Posterior cingulate gyrus (tissue), 11 donors: ENCODE measurements at regions of chr2 and their contacts with region 1.

Region 1: GRCh38 chr2:208254871-208255556 is at the start of gene IDH1:
- DNase-seq: peak; percentile 93 to 100 (median 97)

Region 2: DNA sequence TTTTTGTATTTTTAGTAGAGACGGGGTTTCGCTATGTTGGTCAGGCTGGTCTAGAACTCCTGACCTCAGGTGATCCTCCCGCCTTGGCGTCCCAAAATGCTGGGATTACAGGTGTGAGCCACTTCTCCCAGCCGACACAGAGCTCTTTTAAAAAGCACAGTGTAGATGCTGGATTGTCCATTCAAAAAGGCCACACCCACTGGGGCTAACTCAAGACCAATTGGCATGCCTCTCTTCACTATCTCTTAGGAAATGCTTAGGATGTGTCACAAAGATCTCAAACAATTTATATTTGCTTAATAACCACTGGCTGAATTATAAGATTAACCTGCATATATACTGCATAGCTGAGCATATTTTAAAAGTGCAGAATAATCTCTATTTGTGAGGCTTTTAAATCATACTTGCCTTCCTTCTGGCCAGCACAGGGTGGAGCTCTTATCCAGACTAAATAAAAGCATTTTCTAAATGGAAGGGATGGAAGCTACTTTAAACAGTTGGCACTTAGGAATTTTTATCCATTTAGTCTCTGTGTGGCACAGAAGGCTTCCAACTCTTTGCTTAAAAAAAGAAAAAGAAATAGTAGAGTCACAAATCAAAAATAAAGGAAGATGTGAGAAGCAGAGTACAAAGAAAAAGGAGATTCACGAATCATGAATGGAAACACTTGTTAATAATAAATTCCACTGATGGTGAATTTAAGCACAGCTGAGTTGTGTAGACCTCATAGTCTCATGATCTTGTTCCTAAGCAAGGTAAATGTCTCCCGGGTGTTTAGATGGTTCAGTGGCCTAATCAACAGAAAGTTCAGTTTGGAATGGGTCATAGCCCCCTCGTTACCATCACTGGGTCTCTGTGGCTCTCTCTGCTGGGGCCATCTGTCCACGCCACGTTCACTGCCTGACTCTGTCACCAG is 153.0 kb before region 1 on chr2:
- intact Hi-C with region 1: loop called (anchors 2 kb)
- DNase-seq: peak in 1 of 10 donors; percentile 15

Region 3: DNA sequence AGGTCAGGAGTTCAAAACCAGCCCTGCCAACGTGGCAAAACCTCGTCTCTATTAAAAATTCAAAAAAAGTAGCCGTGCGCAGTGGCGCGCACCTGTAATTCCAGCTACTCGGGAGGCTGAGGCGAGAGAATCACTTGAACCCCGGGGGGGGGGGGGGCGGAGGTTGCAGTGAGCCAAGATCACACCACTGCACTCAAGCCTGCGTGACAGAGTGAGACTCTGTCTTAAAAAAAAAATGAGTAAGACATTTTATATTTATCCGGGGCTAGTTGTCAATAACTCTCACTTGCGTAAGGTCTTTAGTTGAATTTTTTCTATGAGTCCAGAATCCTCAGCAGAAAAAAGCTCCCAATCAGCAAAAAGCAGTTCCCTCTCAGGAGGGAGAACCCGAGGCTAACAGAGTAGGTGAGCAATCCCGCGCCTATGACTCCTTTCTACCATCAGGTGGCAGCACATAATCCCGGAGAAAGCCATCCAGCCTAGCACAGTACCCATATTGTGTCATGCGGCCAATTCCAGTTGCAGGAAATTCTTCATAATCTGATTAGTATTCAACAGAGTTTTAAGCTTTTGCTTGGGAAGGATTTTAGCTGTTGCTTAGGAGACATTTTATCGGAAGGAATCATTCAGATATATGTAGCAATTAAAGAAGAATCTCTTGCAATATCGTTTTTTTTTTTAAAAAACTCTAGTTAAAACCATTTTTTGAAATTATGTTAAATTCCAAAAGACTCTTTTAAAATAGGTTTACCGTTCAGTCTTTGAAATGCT is 79.8 kb before region 1 on chr2:
- intact Hi-C with region 1: loop called (anchors 1 kb)
- DNase-seq: peak; percentile 62 to 96 (median 78)

Region 4: GRCh38 chr2:208234786-208235185 is 20.2 kb before region 1 on chr2:
- intact Hi-C with region 1: no loop called
- DNase-seq: no peak

Region 5: DNA sequence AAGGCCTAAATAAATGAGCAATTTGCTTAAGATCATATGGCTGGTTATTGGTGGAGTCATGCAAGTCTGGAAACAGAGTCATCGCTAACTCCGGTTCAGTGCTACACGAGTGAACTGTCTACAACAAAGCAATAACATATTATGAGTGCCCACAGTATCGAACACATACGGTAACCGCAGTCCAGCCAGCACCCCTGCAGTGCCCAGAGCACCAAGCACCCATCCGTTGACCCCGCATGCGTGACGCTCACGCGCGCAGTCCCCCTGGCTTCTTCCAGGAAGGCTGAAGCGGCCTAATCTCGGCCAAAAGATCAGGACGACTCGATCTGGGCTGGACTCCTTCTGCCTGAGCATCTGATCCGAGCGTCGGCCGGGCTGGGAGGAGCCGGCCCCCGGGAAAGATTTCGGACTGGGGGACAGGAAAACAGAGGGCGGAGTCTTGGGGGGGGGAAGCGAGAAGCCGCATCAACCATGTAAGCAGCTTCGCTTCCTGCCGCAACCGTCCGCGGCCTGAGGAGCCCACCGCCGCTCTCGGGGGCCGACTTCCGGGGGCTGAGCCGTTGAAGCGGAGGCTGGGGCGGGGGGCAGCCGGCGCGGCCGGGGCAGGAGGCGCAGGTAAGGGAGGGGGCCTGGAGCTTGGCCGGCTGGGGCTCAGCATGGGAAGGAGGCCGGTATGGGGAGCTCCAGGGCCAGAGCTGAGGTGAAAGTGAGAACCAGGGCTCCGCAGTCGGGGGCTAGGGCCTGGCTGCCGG is 11.0 kb after region 1 on chr2 and contains the start of gene PIKFYVE:
- intact Hi-C with region 1: loop called (anchors 1 kb)
- DNase-seq: peak; percentile 97 to 100 (median 98)

Region 6: GRCh38 chr2:208713066-208713745 is 458.2 kb after region 1 on chr2:
- intact Hi-C with region 1: no loop called
- DNase-seq: no peak